ENCODE measurements at regions of chr3 and their contacts with region 1.

Region 1: GRCh38 chr3:11568503-11569155 is 75.1 kb downstream of the VGLL4 start:
- DNase-seq: no peak
- ATAC-seq: peak; percentile 21

Region 2: DNA sequence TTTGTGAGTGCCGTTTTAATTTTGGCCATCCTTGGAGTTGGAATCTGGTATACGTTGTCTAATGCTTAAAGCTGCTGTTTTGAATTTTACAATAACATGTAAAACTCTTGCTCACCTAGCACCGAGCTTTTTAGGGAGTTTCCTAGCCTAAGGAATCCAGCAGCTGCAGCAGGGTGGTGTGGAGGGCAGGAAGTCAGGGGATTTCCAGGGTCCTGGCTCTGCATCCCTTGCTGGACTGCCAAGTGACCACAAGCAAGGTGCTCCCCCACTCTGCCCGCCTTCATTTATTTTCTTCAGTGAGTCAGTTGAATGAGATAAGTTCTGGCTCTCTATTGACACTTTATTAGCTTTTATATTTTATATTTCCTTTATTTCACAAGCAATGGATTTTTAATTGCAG is 182.7 kb before region 1 on chr3:
- intact Hi-C with region 1: loop called (anchors 10 kb)
- DNase-seq: no peak
- ATAC-seq: no peak

Region 3: DNA sequence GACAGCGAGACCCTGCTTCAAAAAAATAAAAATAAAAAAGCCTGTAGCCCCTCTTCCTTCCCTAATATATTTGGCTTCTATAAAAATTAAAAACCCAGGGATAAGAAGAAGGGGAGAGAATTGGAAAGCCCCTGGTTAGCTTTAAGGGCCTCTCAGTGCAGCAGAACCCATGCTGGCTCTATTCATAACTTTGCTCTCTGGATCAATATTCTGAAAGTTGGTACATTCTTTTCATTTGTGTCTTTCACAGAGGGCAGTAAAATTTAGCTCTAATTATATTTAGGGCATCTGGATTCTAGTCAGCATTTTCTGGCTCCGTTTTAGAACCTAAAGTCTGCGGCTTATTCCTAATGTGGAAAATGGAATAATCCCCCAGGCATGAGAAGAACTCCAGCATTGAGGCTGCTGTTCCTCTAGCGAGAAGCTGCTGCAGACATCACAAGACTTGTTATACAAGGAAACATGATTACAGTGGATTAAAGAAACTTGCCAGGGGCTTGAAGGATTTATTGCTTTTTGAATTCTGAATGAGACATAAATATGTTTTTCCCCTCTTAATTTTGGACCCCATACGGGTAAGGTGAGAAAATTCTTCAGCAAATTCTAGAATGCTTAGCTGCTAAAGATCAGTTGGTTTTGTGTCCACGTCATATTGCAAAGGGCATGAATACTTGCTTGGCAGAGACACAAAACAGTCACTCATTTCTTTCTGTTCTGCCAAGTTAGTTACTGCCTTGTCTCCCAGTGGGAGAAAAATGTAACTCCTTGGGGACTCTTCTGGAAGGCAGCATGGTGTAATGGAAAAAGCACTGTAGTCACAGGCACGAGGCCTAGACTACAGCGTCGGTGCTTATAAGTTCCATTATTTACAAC is 102.6 kb before region 1 on chr3:
- intact Hi-C with region 1: no loop called
- DNase-seq: no peak
- ATAC-seq: peak; percentile 90

Region 4: GRCh38 chr3:11680509-11680908 is 111.9 kb after region 1 on chr3:
- intact Hi-C with region 1: no loop called
- DNase-seq: no peak
- ATAC-seq: no peak

Region 5: DNA sequence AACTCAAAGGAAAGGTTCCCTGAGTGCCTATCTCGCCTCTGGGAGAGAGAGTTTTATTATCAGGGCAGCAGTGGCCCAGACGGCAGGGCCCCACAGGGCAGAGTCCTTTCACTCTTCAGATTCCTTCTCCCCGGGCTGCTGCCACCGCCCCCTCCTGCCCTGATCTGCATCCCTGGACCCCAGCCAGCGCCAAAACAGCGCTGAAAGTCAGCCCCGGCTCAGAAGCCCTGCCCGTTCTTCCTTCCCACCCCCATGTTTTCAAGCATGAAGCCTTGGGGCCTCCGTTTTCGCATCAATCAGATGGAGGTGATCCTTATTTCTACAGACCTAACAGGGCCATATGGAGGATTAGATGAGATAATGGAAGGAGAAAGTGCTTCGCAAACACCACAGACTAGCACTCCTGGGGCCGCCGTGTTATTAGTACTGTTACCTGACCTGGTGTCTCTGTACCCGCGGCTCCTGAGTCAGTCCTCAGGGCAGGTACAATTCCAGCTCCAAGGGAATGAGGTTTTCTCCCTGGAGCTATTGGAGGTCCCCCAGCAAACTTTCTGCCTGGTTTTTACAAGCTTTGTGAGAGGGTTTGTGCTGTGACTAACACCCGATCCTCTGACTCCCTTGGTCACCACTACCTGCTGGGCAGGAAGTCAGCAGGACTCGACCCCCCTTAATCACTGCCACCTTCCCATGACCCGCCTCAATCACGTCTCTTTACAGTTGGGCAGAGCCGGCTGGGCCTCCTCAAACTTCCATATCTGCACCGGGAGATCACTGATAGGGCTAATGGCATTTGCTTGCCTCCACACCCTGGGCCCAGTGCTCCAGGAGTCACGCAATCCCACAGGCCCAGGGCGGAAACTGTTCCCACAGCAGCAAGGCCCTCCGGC is 876.2 kb after region 1 on chr3:
- intact Hi-C with region 1: no loop called
- DNase-seq: no peak
- ATAC-seq: no peak

Measured in Right ventricle myocardium inferior (tissue), 1 donor.